ENCODE measurements at regions of chr10 and their contacts with region 1.

Region 1: GRCh38 chr10:68600041-68600778 is 40.1 kb downstream of the TET1 start:
- DNase-seq: peak; percentile 38 to 55
- ATAC-seq: peak; percentile 78 to 87 (median 84)
- H3K4me3 ChIP-seq: peak overlapping the region; percentile 76
- H3K27ac ChIP-seq: peak overlapping the region; percentile 68
- H3K4me1 ChIP-seq: peaks cover 26% of the 10 kb centered on the region
- H3K27me3 ChIP-seq: no peaks in the 10 kb centered on the region
- CTCF ChIP-seq: no peak

Region 2: DNA sequence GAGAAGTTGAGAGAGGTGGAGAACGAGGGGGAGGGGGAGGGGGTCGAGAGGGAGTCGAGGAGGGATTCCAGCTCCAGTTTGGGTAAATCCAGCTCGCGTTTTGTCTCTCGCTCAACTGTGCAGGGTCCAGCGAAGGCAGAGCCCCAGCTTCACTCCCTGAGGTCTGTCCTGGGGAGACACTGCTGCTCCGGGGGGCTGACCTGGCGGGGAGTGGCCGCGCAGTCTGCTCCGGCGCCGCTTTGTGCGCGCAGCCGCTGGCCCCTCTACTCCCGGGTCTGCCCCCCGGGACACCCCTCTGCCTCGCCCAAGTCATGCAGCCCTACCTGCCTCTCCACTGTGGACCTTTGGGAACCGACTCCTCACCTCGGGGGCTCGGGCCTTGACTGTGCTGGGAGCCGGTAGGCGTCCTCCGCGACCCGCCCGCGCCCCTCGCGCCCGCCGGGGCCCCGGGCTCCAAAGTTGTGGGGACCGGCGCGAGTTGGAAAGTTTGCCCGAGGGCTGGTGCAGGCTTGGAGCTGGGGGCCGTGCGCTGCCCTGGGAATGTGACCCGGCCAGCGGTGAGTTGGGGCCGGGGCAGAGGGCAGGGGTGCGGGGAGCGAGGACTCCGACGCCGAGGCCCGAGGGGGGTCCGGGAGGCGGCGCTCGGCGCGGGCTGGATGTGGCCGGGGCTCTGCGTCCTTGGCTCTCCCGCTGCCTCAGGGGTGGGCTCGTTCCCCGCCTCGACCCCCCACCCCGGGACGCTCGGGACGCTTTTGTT is 39.8 kb before region 1 on chr10 and contains the start of gene TET1:
- intact Hi-C with region 1: loop called in 1 of 2 experiments (anchors 5 kb)
- DNase-seq: peak; percentile 55 to 70
- ATAC-seq: peak; percentile 60 to 76 (median 66)
- H3K4me3 ChIP-seq: peak within 1 kb of the TSS; percentile 73
- H3K27ac ChIP-seq: no peak within 1 kb of the TSS
- H3K4me1 ChIP-seq: peaks cover 2% of the 10 kb centered on the region
- H3K27me3 ChIP-seq: peaks cover 0 to 24% (median 2%) of the 10 kb centered on the region in 3 donors
- CTCF ChIP-seq: no peak
- total RNA-seq, gene TET1: 0.66 to 1.8 (median 1.1) TPM

Region 3: GRCh38 chr10:70169649-70170364 is 1569.6 kb after region 1 on chr10:
- intact Hi-C with region 1: no loop called
- DNase-seq: no peak
- ATAC-seq: peak; percentile 29 to 65 (median 40)
- H3K4me3 ChIP-seq: peak overlapping the region; percentile 94
- H3K27ac ChIP-seq: peak overlapping the region; percentile 81
- H3K4me1 ChIP-seq: peaks cover 40% of the 10 kb centered on the region
- H3K27me3 ChIP-seq: no peaks in the 10 kb centered on the region
- CTCF ChIP-seq: no peak